ENCODE measurements at regions of chr6 and their contacts with region 1.

Region 1: GRCh38 chr6:73451223-73452107 is 632 bp downstream of the CGAS start:
- DNase-seq: peak; percentile 22
- H3K4me3 Mint-ChIP-seq: peak overlapping the region; percentile 97
- H3K27ac Mint-ChIP-seq: peak overlapping the region; percentile 87
- H3K4me1 Mint-ChIP-seq: peaks cover 35% of the 10 kb centered on the region
- H3K27me3 Mint-ChIP-seq: no peaks in the 10 kb centered on the region

Region 2: DNA sequence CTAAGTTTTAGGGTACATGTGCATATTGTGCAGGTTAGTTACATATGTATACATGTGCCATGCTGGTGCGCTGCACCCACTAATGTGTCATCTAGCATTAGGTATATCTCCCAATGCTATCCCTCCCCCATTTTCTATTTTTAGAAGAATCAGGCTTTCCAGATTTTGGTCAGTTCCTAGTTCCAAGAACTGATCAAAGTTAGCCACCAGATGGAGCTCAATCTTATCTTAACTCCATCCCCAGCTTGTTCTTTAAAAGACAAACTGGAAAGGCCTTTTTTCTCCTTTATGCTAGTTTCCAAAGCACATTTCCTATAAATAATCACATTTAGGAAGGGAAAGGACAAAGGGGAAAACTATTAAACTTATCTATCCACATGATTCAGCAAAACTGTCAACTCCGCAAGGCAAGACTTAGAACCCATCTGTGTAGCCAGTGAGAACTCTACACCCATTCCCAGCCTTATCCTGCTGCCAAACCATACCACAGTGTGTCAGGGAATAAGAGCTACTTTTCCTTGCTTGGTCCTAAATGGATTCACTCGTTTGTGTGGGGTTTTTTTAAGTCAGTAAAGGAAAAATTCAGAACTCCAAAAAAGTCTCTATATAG is 165.7 kb before region 1 on chr6:
- intact Hi-C with region 1: no loop called
- DNase-seq: no peak
- H3K4me3 Mint-ChIP-seq: no peak overlapping the region
- H3K27ac Mint-ChIP-seq: no peak overlapping the region
- H3K4me1 Mint-ChIP-seq: peaks cover 6% of the 10 kb centered on the region
- H3K27me3 Mint-ChIP-seq: no peaks in the 10 kb centered on the region

Region 3: DNA sequence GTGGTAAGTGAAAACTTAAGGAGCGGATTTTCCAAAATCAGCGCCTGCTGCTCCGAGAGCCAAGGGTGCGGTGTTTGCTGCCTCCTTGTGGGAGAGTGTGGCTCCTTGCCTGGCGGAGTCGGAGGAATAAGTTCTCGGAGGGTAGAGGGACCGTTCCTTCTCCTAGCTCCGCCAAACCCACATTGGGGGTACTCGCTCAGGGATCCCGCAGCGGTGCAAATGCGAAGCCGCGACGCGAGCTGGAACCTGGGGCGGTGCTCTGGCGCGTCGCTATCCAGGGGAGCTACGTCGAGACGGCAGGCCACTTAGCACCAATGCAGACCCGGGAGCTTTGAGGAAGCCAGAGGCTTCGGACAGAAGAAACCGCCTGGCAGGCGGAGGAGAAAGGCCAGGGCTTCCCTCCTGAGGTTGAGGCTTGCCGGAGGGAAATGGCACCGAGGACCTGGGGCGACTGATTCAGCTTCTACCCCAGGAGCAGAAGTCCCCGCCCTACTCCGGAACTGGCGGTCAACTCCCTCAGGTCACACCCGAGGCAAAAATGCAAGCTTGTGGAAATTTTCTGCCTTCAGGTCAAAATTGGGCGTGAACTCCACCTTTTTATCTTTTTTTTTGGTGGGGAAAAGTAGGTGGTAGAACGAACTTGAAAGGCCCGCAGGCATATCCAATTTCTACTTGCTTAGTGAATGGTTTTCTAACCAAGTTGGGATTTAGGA is 62.5 kb before region 1 on chr6:
- intact Hi-C with region 1: loop called (anchors 2 kb)
- DNase-seq: peak; percentile 51
- H3K4me3 Mint-ChIP-seq: peak overlapping the region; percentile 75
- H3K27ac Mint-ChIP-seq: peak overlapping the region; percentile 74
- H3K4me1 Mint-ChIP-seq: peaks cover 19% of the 10 kb centered on the region
- H3K27me3 Mint-ChIP-seq: peaks cover 3% of the 10 kb centered on the region

Region 4: GRCh38 chr6:73435236-73435635 is 16.2 kb before region 1 on chr6:
- intact Hi-C with region 1: loop called (anchors 2 kb)
- DNase-seq: no peak
- H3K4me3 Mint-ChIP-seq: no peak overlapping the region
- H3K27ac Mint-ChIP-seq: no peak overlapping the region
- H3K4me1 Mint-ChIP-seq: peaks cover 32% of the 10 kb centered on the region
- H3K27me3 Mint-ChIP-seq: no peaks in the 10 kb centered on the region

Region 5: GRCh38 chr6:73558624-73559398 is 107.3 kb after region 1 on chr6:
- intact Hi-C with region 1: no loop called
- DNase-seq: no peak
- H3K4me3 Mint-ChIP-seq: no peak overlapping the region
- H3K27ac Mint-ChIP-seq: no peak overlapping the region
- H3K4me1 Mint-ChIP-seq: peaks cover 8% of the 10 kb centered on the region
- H3K27me3 Mint-ChIP-seq: no peaks in the 10 kb centered on the region